ENCODE measurements at regions of chr10 and their contacts with region 1.

Region 1: GRCh38 chr10:97278491-97278989 is 13.9 kb downstream of the ARHGAP19 start:
- DNase-seq: peak; percentile 63
- ATAC-seq: peak; percentile 60
- H3K4me3 ChIP-seq: no peak overlapping the region
- H3K4me3 Mint-ChIP-seq: no peak overlapping the region
- H3K27ac ChIP-seq: no peak overlapping the region
- H3K27ac Mint-ChIP-seq: no peak overlapping the region
- H3K4me1 ChIP-seq: peaks cover 13 to 14% of the 10 kb centered on the region in 2 donors
- H3K4me1 Mint-ChIP-seq: peaks cover 23% of the 10 kb centered on the region
- H3K27me3 ChIP-seq: no peaks in the 10 kb centered on the region
- H3K27me3 Mint-ChIP-seq: no peaks in the 10 kb centered on the region
- CTCF ChIP-seq: peak; percentile 82

Region 2: GRCh38 chr10:97292097-97292862 is 13.7 kb after region 1 on chr10 and contains the start of gene ARHGAP19:
- CTCF ChIA-PET with region 1: interaction called, 21 read pairs
- POLR2A ChIA-PET with region 1: no interaction called
- intact Hi-C with region 1: no loop called
- DNase-seq: peak; percentile 96
- ATAC-seq: peak; percentile 98
- H3K4me3 ChIP-seq: peak within 1 kb of the TSS; percentile 63 to 98 (median 91)
- H3K4me3 Mint-ChIP-seq: peak within 1 kb of the TSS; percentile 90
- H3K27ac ChIP-seq: peak within 1 kb of the TSS; percentile 48 to 85
- H3K27ac Mint-ChIP-seq: peak within 1 kb of the TSS; percentile 86
- H3K4me1 ChIP-seq: peaks cover 6 to 12% of the 10 kb centered on the region in 2 donors
- H3K4me1 Mint-ChIP-seq: peaks cover 16% of the 10 kb centered on the region
- H3K27me3 ChIP-seq: no peaks in the 10 kb centered on the region
- H3K27me3 Mint-ChIP-seq: no peaks in the 10 kb centered on the region
- CTCF ChIP-seq: no peak
- total RNA-seq, gene ARHGAP19: 21.7 and 22.5 TPM in 2 replicates

Region 3: GRCh38 chr10:97318772-97319651 is 40.5 kb after region 1 on chr10 and contains the start of gene FRAT1:
- CTCF ChIA-PET with region 1: interaction called, 17 read pairs
- POLR2A ChIA-PET with region 1: no interaction called
- intact Hi-C with region 1: loop called (anchors 2 kb)
- DNase-seq: peak; percentile 98
- ATAC-seq: peak; percentile 68
- H3K4me3 ChIP-seq: peak within 1 kb of the TSS; percentile 57 to 86 (median 79)
- H3K4me3 Mint-ChIP-seq: peak within 1 kb of the TSS; percentile 98
- H3K27ac ChIP-seq: peak within 1 kb of the TSS; percentile 97 to 100
- H3K27ac Mint-ChIP-seq: peak within 1 kb of the TSS; percentile 100
- H3K4me1 ChIP-seq: peaks cover 18 to 28% of the 10 kb centered on the region in 2 donors
- H3K4me1 Mint-ChIP-seq: peaks cover 33% of the 10 kb centered on the region
- H3K27me3 ChIP-seq: no peaks in the 10 kb centered on the region
- H3K27me3 Mint-ChIP-seq: no peaks in the 10 kb centered on the region
- CTCF ChIP-seq: no peak
- total RNA-seq, gene FRAT1: 25.3 and 27.8 TPM in 2 replicates

Region 4: GRCh38 chr10:97334370-97335175 is 56.0 kb after region 1 on chr10 and contains the start of gene FRAT2:
- CTCF ChIA-PET with region 1: interaction called, 15 read pairs
- POLR2A ChIA-PET with region 1: no interaction called
- intact Hi-C with region 1: no loop called
- DNase-seq: peak; percentile 98
- ATAC-seq: peak; percentile 90
- H3K4me3 ChIP-seq: peak within 1 kb of the TSS; percentile 60 to 86 (median 75)
- H3K4me3 Mint-ChIP-seq: peak within 1 kb of the TSS; percentile 88
- H3K27ac ChIP-seq: peak within 1 kb of the TSS; percentile 93 to 100
- H3K27ac Mint-ChIP-seq: peak within 1 kb of the TSS; percentile 98
- H3K4me1 ChIP-seq: peaks cover 29 to 30% of the 10 kb centered on the region in 2 donors
- H3K4me1 Mint-ChIP-seq: peaks cover 33% of the 10 kb centered on the region
- H3K27me3 ChIP-seq: no peaks in the 10 kb centered on the region
- H3K27me3 Mint-ChIP-seq: no peaks in the 10 kb centered on the region
- CTCF ChIP-seq: no peak
- total RNA-seq, gene FRAT2: 30.2 and 31.5 TPM in 2 replicates

Region 5: GRCh38 chr10:97355571-97355975 is 77.0 kb after region 1 on chr10:
- CTCF ChIA-PET with region 1: interaction called, 55 read pairs
- POLR2A ChIA-PET with region 1: no interaction called
- intact Hi-C with region 1: loop called (anchors 2 kb)
- DNase-seq: peak; percentile 38
- ATAC-seq: peak; percentile 36
- H3K4me3 ChIP-seq: no peak overlapping the region
- H3K4me3 Mint-ChIP-seq: no peak overlapping the region
- H3K27ac ChIP-seq: no peak overlapping the region
- H3K27ac Mint-ChIP-seq: no peak overlapping the region
- H3K4me1 ChIP-seq: peaks cover 0 to 6% of the 10 kb centered on the region in 2 donors
- H3K4me1 Mint-ChIP-seq: no peaks in the 10 kb centered on the region
- H3K27me3 ChIP-seq: no peaks in the 10 kb centered on the region
- H3K27me3 Mint-ChIP-seq: no peaks in the 10 kb centered on the region
- CTCF ChIP-seq: no peak

Region 6: GRCh38 chr10:97553575-97554031 is 275.1 kb after region 1 on chr10:
- CTCF ChIA-PET with region 1: interaction called, 8 read pairs
- POLR2A ChIA-PET with region 1: no interaction called
- intact Hi-C with region 1: loop called (anchors 2 kb)
- DNase-seq: peak; percentile 59
- ATAC-seq: peak; percentile 81
- H3K4me3 ChIP-seq: no peak overlapping the region
- H3K4me3 Mint-ChIP-seq: no peak overlapping the region
- H3K27ac ChIP-seq: no peak overlapping the region
- H3K27ac Mint-ChIP-seq: no peak overlapping the region
- H3K4me1 ChIP-seq: no peaks in the 10 kb centered on the region
- H3K4me1 Mint-ChIP-seq: no peaks in the 10 kb centered on the region
- H3K27me3 ChIP-seq: no peaks in the 10 kb centered on the region
- H3K27me3 Mint-ChIP-seq: no peaks in the 10 kb centered on the region
- CTCF ChIP-seq: peak; percentile 73

Measured in B cell (primary cell).